Naive thymus-derived CD4-positive, alpha-beta T cell (primary cell): ENCODE measurements at regions of chr10 and their contacts with region 1.

Region 1: DNA sequence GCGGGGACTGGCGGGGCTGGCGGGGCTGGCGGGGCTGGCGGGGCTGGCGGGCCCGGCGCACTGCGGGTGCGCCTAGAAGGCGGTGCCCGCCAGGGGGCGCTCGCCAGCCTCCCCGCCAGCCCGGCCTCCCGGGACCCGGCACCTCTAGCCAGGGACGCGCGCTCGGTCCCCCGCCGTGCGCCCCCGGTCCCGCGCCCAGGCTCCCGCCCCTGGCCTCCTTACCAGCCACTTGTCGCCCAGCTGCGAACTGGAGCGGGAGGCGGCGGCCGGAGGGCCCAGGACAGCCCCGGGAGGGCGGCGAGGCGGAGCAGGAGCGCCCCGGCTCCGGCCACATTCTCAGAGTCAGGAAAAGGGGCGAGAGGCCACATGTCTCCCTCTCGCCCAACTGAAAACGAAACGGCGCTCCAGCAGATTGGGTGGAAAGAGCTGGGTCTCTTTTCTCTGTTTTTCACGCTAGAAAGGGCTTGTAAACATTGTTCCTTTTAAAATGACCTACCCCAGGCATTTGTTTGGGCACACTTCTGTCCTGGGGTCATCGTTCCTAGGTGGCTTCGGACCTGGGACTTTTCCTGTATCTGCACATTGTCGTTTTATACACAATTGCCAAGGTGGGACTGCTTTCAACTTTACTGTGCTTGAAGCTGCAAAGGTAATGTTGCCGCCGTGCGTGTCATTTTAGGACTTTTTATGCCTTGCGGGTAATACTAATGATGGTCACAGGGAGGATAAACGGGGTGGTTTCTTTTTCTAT is 378 bp upstream of the PRKCQ start:
- DNase-seq: peak; percentile 74 to 95 (median 84)
- ATAC-seq: peak; percentile 92
- H3K4me3 ChIP-seq: peak overlapping the region; percentile 88
- H3K4me3 Mint-ChIP-seq: peak overlapping the region; percentile 86 to 99 (median 93)
- H3K27ac ChIP-seq: peak overlapping the region; percentile 94
- H3K27ac Mint-ChIP-seq: peak overlapping the region; percentile 94 to 99 (median 98)
- H3K4me1 ChIP-seq: peaks cover 33 to 42% of the 10 kb centered on the region in 2 donors
- H3K4me1 Mint-ChIP-seq: peaks cover 35 to 67% (median 56%) of the 10 kb centered on the region in 7 donors
- H3K27me3 ChIP-seq: no peaks in the 10 kb centered on the region
- H3K27me3 Mint-ChIP-seq: no peaks in the 10 kb centered on the region

Region 2: GRCh38 chr10:5488309-5489167 is 1091.9 kb before region 1 on chr10:
- CTCF ChIA-PET with region 1: no interaction called
- POLR2A ChIA-PET with region 1: no interaction called
- intact Hi-C with region 1: no loop called
- DNase-seq: no peak
- ATAC-seq: no peak
- H3K4me3 ChIP-seq: no peak overlapping the region
- H3K4me3 Mint-ChIP-seq: no peak overlapping the region
- H3K27ac ChIP-seq: no peak overlapping the region
- H3K27ac Mint-ChIP-seq: no peak overlapping the region
- H3K4me1 ChIP-seq: no peaks in the 10 kb centered on the region
- H3K4me1 Mint-ChIP-seq: peaks cover 0 to 8% (median 0%) of the 10 kb centered on the region in 7 donors
- H3K27me3 ChIP-seq: no peaks in the 10 kb centered on the region
- H3K27me3 Mint-ChIP-seq: peaks cover 0 to 8% (median 0%) of the 10 kb centered on the region in 5 donors

Region 3: DNA sequence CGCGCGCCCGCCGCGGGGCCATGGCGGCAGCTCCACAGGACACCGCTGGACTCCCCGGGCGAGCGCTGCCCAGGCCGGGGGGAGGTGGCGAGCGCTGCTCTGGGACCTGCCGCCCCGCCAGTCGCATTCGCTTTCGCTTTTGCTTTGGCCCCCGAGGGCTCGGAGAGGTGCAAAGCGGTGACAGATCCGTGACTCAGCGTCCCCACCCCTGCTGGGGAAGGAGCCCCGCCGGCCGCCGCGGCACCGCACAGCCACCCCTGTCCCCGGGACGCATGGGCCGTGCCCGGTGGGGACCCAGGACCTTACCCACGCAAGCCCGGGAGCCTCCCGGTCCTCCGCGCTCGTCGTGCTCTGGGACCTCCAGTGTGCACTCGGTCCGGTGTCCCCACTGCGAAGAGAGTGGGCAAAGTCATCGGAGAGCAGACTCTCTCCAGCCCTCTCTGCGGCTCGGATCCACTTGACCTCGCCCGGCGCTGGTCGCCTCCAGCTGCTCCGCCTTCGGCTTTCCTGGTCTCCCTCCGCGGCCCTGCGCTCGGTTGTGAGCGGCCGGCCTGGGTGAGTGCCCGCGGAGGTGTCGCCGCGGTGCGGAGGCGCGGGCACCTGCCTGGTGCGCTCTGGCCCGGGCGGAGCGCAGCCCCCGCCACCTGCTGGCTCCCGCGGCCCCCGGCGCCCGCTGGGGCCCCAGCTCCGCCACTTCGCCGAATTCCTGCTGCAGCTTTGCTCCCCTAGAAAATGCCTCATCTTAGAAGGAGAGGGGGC is 602.8 kb before region 1 on chr10 and contains the start of gene IL15RA:
- CTCF ChIA-PET with region 1: no interaction called
- POLR2A ChIA-PET with region 1: no interaction called
- intact Hi-C with region 1: no loop called
- DNase-seq: peak; percentile 60 to 89 (median 71)
- ATAC-seq: peak; percentile 84
- H3K4me3 ChIP-seq: peak within 1 kb of the TSS; percentile 97
- H3K4me3 Mint-ChIP-seq: peak within 1 kb of the TSS; percentile 89 to 98 (median 96)
- H3K27ac ChIP-seq: peak within 1 kb of the TSS; percentile 74
- H3K27ac Mint-ChIP-seq: peak within 1 kb of the TSS; percentile 85 to 97 (median 89)
- H3K4me1 ChIP-seq: peaks cover 0 to 6% of the 10 kb centered on the region in 2 donors
- H3K4me1 Mint-ChIP-seq: peaks cover 12 to 36% (median 21%) of the 10 kb centered on the region in 7 donors
- H3K27me3 ChIP-seq: no peaks in the 10 kb centered on the region
- H3K27me3 Mint-ChIP-seq: peaks cover 0 to 21% (median 0%) of the 10 kb centered on the region in 5 donors
- total RNA-seq, gene IL15RA: 3.5 to 24.9 (median 5.6) TPM

Region 4: DNA sequence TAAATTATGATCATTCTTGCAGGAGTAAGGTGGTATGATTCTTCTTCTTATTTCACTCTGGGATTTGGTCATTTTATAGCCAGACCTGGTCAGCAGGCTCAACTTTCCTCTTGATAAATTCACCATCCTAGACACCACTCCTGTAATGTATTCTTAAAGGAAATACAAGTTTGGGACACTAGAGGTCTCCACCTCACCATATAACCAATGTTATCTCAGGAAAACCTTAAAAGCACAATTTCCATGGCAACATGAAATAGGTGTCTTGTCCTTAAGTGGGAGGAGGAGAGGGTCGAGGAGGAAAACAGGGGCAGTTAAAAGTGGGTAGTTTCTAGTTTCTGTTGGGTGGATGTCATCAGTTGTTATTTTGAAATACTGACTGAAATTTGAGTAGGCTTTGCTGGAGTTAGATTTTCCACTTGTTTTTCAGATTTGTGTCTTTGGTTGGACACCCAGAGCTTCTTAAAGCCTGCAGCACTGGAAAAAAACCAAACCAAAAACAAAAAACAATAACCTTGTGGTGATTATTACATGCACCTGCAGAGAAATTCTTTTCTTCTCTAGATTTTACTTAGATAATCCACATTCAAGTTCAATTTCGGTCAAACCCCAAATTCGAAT is 163.5 kb before region 1 on chr10:
- CTCF ChIA-PET with region 1: interaction called, 5 read pairs
- POLR2A ChIA-PET with region 1: no interaction called
- intact Hi-C with region 1: loop called (anchors 1 to 2 kb)
- DNase-seq: peak in 7 of 9 donors; percentile 36 to 59 (median 43)
- ATAC-seq: peak; percentile 88
- H3K4me3 ChIP-seq: no peak overlapping the region
- H3K4me3 Mint-ChIP-seq: no peak overlapping the region
- H3K27ac ChIP-seq: no peak overlapping the region
- H3K27ac Mint-ChIP-seq: no peak overlapping the region
- H3K4me1 ChIP-seq: no peaks in the 10 kb centered on the region
- H3K4me1 Mint-ChIP-seq: peaks cover 0 to 6% (median 0%) of the 10 kb centered on the region in 7 donors
- H3K27me3 ChIP-seq: no peaks in the 10 kb centered on the region
- H3K27me3 Mint-ChIP-seq: no peaks in the 10 kb centered on the region

Region 5: GRCh38 chr10:6498771-6499170 is 81.7 kb before region 1 on chr10:
- CTCF ChIA-PET with region 1: interaction called, 4 read pairs
- POLR2A ChIA-PET with region 1: interaction called, 4 read pairs
- intact Hi-C with region 1: loop called (anchors 1 kb)
- DNase-seq: peak in 8 of 9 donors; percentile 48 to 75 (median 67)
- ATAC-seq: peak; percentile 85
- H3K4me3 ChIP-seq: no peak overlapping the region
- H3K4me3 Mint-ChIP-seq: peak overlapping the region; percentile 13 to 86 (median 59)
- H3K27ac ChIP-seq: peak overlapping the region; percentile 36
- H3K27ac Mint-ChIP-seq: peak overlapping the region; percentile 81 to 94 (median 90)
- H3K4me1 ChIP-seq: peaks cover 33 to 49% of the 10 kb centered on the region in 2 donors
- H3K4me1 Mint-ChIP-seq: peaks cover 24 to 47% (median 43%) of the 10 kb centered on the region in 7 donors
- H3K27me3 ChIP-seq: no peaks in the 10 kb centered on the region
- H3K27me3 Mint-ChIP-seq: no peaks in the 10 kb centered on the region

Region 6: GRCh38 chr10:6542999-6543430 is 37.4 kb before region 1 on chr10:
- CTCF ChIA-PET with region 1: interaction called, 11 read pairs
- POLR2A ChIA-PET with region 1: interaction called, 31 read pairs
- intact Hi-C with region 1: loop called (anchors 1 kb)
- DNase-seq: peak in 8 of 9 donors; percentile 45 to 83 (median 78)
- ATAC-seq: peak; percentile 90
- H3K4me3 ChIP-seq: peak overlapping the region; percentile 64
- H3K4me3 Mint-ChIP-seq: peak overlapping the region; percentile 79 to 95 (median 88)
- H3K27ac ChIP-seq: peak overlapping the region; percentile 73
- H3K27ac Mint-ChIP-seq: peak overlapping the region; percentile 97 to 100 (median 99)
- H3K4me1 ChIP-seq: peaks cover 55 to 66% of the 10 kb centered on the region in 2 donors
- H3K4me1 Mint-ChIP-seq: peaks cover 43 to 90% (median 76%) of the 10 kb centered on the region in 7 donors
- H3K27me3 ChIP-seq: no peaks in the 10 kb centered on the region
- H3K27me3 Mint-ChIP-seq: no peaks in the 10 kb centered on the region

Region 7: GRCh38 chr10:6601246-6601805 is 20.9 kb after region 1 on chr10:
- CTCF ChIA-PET with region 1: interaction called, 206 read pairs
- POLR2A ChIA-PET with region 1: interaction called, 378 read pairs
- intact Hi-C with region 1: loop called (anchors 1 kb)
- DNase-seq: peak in 6 of 9 donors; percentile 62 to 71 (median 65)
- ATAC-seq: peak; percentile 65
- H3K4me3 ChIP-seq: no peak overlapping the region
- H3K4me3 Mint-ChIP-seq: peak overlapping the region; percentile 52 to 86 (median 67)
- H3K27ac ChIP-seq: peak overlapping the region; percentile 63
- H3K27ac Mint-ChIP-seq: peak overlapping the region; percentile 60 to 100 (median 96)
- H3K4me1 ChIP-seq: peaks cover 17 to 56% of the 10 kb centered on the region in 2 donors
- H3K4me1 Mint-ChIP-seq: peaks cover 37 to 94% (median 86%) of the 10 kb centered on the region in 7 donors
- H3K27me3 ChIP-seq: no peaks in the 10 kb centered on the region
- H3K27me3 Mint-ChIP-seq: no peaks in the 10 kb centered on the region

Region 8: GRCh38 chr10:6667679-6668270 is 87.3 kb after region 1 on chr10:
- CTCF ChIA-PET with region 1: interaction called, 8 read pairs
- POLR2A ChIA-PET with region 1: interaction called, 3 read pairs
- intact Hi-C with region 1: loop called (anchors 1 kb)
- DNase-seq: peak in 6 of 9 donors; percentile 17 to 45 (median 30)
- ATAC-seq: peak; percentile 59
- H3K4me3 ChIP-seq: no peak overlapping the region
- H3K4me3 Mint-ChIP-seq: no peak overlapping the region
- H3K27ac ChIP-seq: no peak overlapping the region
- H3K27ac Mint-ChIP-seq: no peak overlapping the region
- H3K4me1 ChIP-seq: peaks cover 0 to 10% of the 10 kb centered on the region in 2 donors
- H3K4me1 Mint-ChIP-seq: peaks cover 12 to 35% (median 24%) of the 10 kb centered on the region in 7 donors
- H3K27me3 ChIP-seq: no peaks in the 10 kb centered on the region
- H3K27me3 Mint-ChIP-seq: peaks cover 0 to 13% (median 0%) of the 10 kb centered on the region in 5 donors